ENCODE measurements at regions of chr2 and their contacts with region 1.

Region 1: DNA sequence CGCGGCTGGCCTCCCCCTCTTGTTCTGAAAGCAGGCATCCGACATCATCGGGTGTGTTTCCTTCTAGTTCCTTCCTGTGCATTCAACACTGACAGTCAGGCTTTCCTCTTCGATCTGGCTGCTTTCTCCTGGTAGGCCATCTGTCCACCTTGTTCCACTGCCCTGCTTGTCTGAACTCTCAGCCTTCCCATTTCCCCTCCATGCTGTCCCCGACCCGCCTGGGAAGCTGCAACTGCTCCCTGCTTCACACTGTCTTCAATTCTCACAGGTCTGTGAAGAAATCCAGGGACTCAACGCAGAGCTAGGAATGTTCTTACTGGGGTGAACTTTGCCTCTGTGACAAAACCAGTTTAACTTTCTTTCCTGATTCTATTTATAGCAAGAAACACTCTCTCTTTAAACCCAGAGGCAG is 43.0 kb downstream of the KIF3C start:
- DNase-seq: no peak
- ATAC-seq: no peak
- H3K4me3 ChIP-seq: no peak overlapping the region
- H3K27ac ChIP-seq: no peak overlapping the region
- H3K4me1 ChIP-seq: no peaks in the 10 kb centered on the region
- H3K27me3 ChIP-seq: no peaks in the 10 kb centered on the region
- CTCF ChIP-seq: no peak
- POLR2A ChIP-seq: no peak
- RAD21 ChIP-seq: no peak

Region 2: GRCh38 chr2:25878361-25879132 is 60.7 kb before region 1 on chr2 and contains the start of gene ASXL2:
- CTCF ChIA-PET with region 1: no interaction called
- POLR2A ChIA-PET with region 1: no interaction called
- dilution Hi-C with region 1: no loop called
- in situ Hi-C with region 1: no loop called
- intact Hi-C with region 1: no loop called
- DNase-seq: peak; percentile 97
- ATAC-seq: peak; percentile 95
- H3K4me3 ChIP-seq: peak within 1 kb of the TSS; percentile 91
- H3K27ac ChIP-seq: peak within 1 kb of the TSS; percentile 88
- H3K4me1 ChIP-seq: peaks cover 7% of the 10 kb centered on the region; the same call in 1 of the 2 replicates
- H3K27me3 ChIP-seq: no peaks in the 10 kb centered on the region
- CTCF ChIP-seq: no peak
- POLR2A ChIP-seq: peak; percentile 90
- RAD21 ChIP-seq: 0 out of 2 replicates have a peak, but pooled peaks have one; percentile 5
- total RNA-seq, gene ASXL2: 7.5 and 8.1 TPM in 2 replicates

Region 3: DNA sequence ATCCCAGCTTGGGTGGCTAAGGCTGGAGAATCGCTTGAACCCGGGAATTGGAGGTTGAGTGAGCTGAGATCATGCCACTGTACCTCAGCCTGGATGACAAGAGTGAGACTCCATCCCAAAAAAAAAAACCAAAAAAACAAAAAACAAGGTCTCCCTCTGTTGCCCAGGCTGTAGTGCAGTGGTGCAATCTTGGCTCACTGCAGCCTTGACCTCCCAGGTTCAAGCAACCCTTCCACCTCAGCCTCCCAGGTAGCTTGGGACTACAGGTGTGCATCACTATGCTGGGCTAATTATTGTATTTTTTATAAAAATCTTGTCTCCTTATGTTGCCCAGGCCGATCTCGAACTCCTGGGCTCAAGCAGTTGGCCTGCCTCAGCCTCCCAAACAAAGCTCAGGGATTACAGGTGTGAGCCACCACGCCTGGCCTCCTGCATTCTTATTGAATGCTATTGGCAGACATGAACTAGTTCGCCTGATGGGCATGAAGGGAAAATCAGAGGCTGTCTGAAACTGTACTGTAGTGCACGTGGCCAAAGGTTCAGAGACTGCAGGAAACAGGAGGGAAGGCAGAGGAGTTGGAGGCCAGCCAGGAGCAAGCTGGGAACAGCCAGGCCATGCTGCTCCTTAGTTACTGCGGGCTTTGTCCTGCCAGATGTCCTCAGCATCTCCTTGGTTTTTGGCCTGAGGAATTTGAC is 45.0 kb before region 1 on chr2:
- CTCF ChIA-PET with region 1: no interaction called
- POLR2A ChIA-PET with region 1: no interaction called
- dilution Hi-C with region 1: no loop called
- in situ Hi-C with region 1: no loop called
- intact Hi-C with region 1: no loop called
- DNase-seq: peak; percentile 56
- ATAC-seq: no peak
- H3K4me3 ChIP-seq: no peak overlapping the region
- H3K27ac ChIP-seq: no peak overlapping the region
- H3K4me1 ChIP-seq: peaks cover 3% of the 10 kb centered on the region; the same call in 1 of the 2 replicates
- H3K27me3 ChIP-seq: peaks cover 2% of the 10 kb centered on the region; the same call in 1 of the 2 replicates
- CTCF ChIP-seq: no peak
- POLR2A ChIP-seq: no peak
- RAD21 ChIP-seq: no peak

Region 4: GRCh38 chr2:26401739-26402541 is 462.7 kb after region 1 on chr2 and contains the start of gene DRC1:
- CTCF ChIA-PET with region 1: no interaction called
- POLR2A ChIA-PET with region 1: interaction called, 10 read pairs
- dilution Hi-C with region 1: no loop called
- in situ Hi-C with region 1: no loop called
- intact Hi-C with region 1: no loop called
- DNase-seq: peak; percentile 67
- ATAC-seq: peak; percentile 98
- H3K4me3 ChIP-seq: peak within 1 kb of the TSS; percentile 71
- H3K27ac ChIP-seq: no peak within 1 kb of the TSS
- H3K4me1 ChIP-seq: no peaks in the 10 kb centered on the region
- H3K27me3 ChIP-seq: no peaks in the 10 kb centered on the region; the same call in 1 of the 2 replicates
- CTCF ChIP-seq: no peak
- POLR2A ChIP-seq: no peak; the same call in 1 of the 2 replicates
- RAD21 ChIP-seq: no peak
- total RNA-seq, gene DRC1: under 0.01 and 0.18 TPM in 2 replicates